Natural killer cell (primary cell): ENCODE measurements at regions of chr3 and their contacts with region 1.

Region 1: GRCh38 chr3:9422712-9423424 is 25.5 kb downstream of the SETD5 start:
- DNase-seq: peak in 1 of 2 donors; percentile 69
- ATAC-seq: peak; percentile 70 to 91 (median 79)
- H3K4me3 ChIP-seq: no peak overlapping the region
- H3K4me3 Mint-ChIP-seq: no peak overlapping the region
- H3K27ac ChIP-seq: no peak overlapping the region
- H3K27ac Mint-ChIP-seq: peak overlapping the region; percentile 74 to 75
- H3K4me1 ChIP-seq: no peaks in the 10 kb centered on the region
- H3K4me1 Mint-ChIP-seq: peaks cover 39 to 44% of the 10 kb centered on the region in 2 donors
- H3K27me3 ChIP-seq: no peaks in the 10 kb centered on the region
- H3K27me3 Mint-ChIP-seq: no peaks in the 10 kb centered on the region
- CTCF ChIP-seq: peak; percentile 64

Region 2: GRCh38 chr3:9172851-9173321 is 250.0 kb before region 1 on chr3:
- intact Hi-C with region 1: no loop called
- DNase-seq: no peak
- ATAC-seq: no peak
- H3K4me3 ChIP-seq: no peak overlapping the region
- H3K4me3 Mint-ChIP-seq: peak overlapping the region; percentile 23
- H3K27ac ChIP-seq: no peak overlapping the region
- H3K27ac Mint-ChIP-seq: no peak overlapping the region
- H3K4me1 ChIP-seq: peaks cover 48% of the 10 kb centered on the region
- H3K4me1 Mint-ChIP-seq: peaks cover 28 to 40% of the 10 kb centered on the region in 2 donors
- H3K27me3 ChIP-seq: no peaks in the 10 kb centered on the region
- H3K27me3 Mint-ChIP-seq: peaks cover 4 to 15% of the 10 kb centered on the region in 2 donors
- CTCF ChIP-seq: no peak

Region 3: DNA sequence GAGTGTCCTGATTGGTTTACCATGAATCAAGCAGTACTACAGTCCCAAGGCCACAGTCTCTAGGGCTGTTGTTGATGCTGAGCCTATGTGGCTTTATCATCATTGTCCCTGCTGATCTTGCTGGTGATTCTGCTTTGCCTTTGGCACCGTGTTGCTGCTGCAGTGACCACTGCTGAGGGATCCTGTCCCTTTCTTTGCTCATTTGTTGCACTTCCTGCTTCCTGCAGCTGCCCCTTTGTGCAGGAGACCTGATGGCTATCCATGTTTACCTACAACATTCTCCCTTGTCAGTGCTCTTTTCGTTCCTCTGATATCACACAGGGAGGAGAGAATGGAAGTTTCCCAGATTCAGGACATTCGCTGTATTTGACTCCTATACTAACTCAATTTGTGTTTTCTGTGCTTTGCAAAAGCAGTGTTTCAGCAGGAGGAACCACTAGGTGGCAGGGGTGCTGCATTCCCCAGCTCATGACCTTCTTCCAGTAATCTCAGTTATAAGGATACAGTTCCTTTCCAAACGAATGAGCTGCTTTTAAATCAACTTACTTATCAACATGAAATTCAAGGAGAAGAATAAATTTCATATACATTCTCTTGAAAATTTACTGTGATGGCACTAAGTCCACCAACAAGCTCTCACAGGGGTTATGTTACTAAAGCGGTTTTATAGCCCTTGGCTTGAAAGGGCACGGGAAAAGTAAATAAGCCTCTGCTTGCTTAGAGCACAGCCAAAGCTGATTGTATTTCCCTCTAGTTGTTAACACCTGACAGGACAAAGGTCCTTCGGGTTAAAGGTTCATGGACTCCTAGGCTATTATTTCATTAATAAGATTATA is 69.7 kb before region 1 on chr3:
- intact Hi-C with region 1: loop called (anchors 1 kb)
- DNase-seq: peak; percentile 46 to 80
- ATAC-seq: peak; percentile 73 to 85 (median 79)
- H3K4me3 ChIP-seq: no peak overlapping the region
- H3K4me3 Mint-ChIP-seq: no peak overlapping the region
- H3K27ac ChIP-seq: no peak overlapping the region
- H3K27ac Mint-ChIP-seq: peak overlapping the region in 1 of 2 donors; percentile 14
- H3K4me1 ChIP-seq: no peaks in the 10 kb centered on the region
- H3K4me1 Mint-ChIP-seq: peaks cover 5 to 6% of the 10 kb centered on the region in 2 donors
- H3K27me3 ChIP-seq: no peaks in the 10 kb centered on the region
- H3K27me3 Mint-ChIP-seq: no peaks in the 10 kb centered on the region
- CTCF ChIP-seq: peak; percentile 76